ENCODE measurements at regions of chr20 and their contacts with region 1.

Region 1: DNA sequence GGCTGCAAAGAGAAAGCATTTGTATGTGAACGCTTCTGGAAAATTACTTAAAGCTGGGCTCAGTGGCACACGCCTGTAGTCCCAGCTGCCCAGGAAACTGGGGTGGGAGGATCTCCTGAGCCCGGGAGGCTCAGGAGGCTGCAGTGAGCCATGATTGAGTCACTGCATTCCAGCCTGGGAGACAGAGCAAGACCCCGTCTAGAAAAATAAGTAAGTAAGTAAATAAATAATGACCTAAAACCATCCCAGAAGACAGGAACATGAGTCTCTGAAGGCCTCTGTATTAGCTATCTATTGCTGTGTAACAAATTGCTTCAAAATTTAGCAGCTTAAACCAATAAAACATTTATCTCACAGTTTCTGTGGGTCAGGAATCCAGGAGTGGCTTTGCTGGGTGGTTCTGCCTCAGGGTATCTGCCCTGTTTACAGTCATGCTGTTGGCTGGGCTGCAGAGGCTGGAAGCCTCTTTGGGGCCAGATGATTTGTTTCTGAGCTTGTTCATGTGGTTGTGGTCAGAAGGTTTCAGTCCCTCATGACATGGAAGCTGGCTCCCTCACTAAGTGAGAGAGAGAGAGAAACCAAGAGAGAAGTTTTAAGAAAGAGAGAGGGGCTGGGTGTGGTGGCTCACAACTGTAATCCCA is 48.4 kb upstream of the NCOA3 start:
- DNase-seq: peak; percentile 75
- ATAC-seq: peak; percentile 82
- H3K4me3 Mint-ChIP-seq: peak overlapping the region; percentile 34
- H3K27ac Mint-ChIP-seq: peak overlapping the region; percentile 70
- H3K4me1 Mint-ChIP-seq: peaks cover 51% of the 10 kb centered on the region
- H3K27me3 Mint-ChIP-seq: no peaks in the 10 kb centered on the region
- CTCF ChIP-seq: no peak

Region 2: GRCh38 chr20:47464380-47465101 is 11.3 kb after region 1 on chr20:
- CTCF ChIA-PET with region 1: no interaction called
- POLR2A ChIA-PET with region 1: no interaction called
- intact Hi-C with region 1: no loop called
- DNase-seq: no peak
- ATAC-seq: no peak
- H3K4me3 Mint-ChIP-seq: no peak overlapping the region
- H3K27ac Mint-ChIP-seq: no peak overlapping the region
- H3K4me1 Mint-ChIP-seq: no peaks in the 10 kb centered on the region
- H3K27me3 Mint-ChIP-seq: no peaks in the 10 kb centered on the region
- CTCF ChIP-seq: no peak

Region 3: DNA sequence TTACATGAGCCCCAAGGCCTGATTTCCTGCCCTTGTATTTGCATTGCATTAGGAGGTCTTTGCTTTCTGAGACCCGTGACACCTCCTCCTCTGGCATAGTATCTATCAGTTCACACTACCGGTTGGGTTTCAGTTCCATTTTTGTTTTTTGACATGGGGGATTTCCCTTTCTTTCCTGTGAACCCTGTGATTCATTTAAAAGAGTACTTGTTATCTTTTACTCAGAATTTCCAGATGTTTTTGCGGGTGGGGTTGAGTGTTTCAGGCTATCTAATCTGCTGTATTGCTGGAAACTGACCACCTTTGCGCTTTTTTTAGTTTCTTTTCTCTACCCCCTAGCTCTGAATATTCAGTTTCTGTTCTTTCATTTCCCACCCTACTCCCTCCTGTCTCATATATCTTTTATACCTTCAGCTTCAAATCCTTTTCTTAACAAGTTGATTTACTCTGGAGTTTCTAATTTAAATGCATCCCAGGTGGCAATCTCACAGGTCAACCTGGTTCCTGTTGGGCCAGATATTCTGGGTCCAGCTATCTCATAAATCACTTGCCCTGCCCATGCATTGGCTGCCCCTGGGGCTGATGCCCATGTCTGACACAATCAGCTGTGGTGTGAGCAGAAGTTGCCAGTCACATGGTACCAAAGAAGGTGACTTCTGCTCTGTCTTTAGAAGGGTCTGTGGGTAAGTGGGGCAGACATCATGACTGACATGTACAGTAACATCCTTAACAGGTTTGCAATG is 34.1 kb after region 1 on chr20:
- CTCF ChIA-PET with region 1: interaction called, 5 read pairs
- POLR2A ChIA-PET with region 1: interaction called, 12 read pairs
- intact Hi-C with region 1: no loop called
- DNase-seq: peak; percentile 84
- ATAC-seq: peak; percentile 87
- H3K4me3 Mint-ChIP-seq: peak overlapping the region; percentile 54
- H3K27ac Mint-ChIP-seq: peak overlapping the region; percentile 100
- H3K4me1 Mint-ChIP-seq: peaks cover 61% of the 10 kb centered on the region
- H3K27me3 Mint-ChIP-seq: no peaks in the 10 kb centered on the region
- CTCF ChIP-seq: no peak

Region 4: GRCh38 chr20:47515843-47516242 is 62.6 kb after region 1 on chr20:
- CTCF ChIA-PET with region 1: no interaction called
- POLR2A ChIA-PET with region 1: no interaction called
- intact Hi-C with region 1: no loop called
- DNase-seq: no peak
- ATAC-seq: peak; percentile 88
- H3K4me3 Mint-ChIP-seq: no peak overlapping the region
- H3K27ac Mint-ChIP-seq: peak overlapping the region; percentile 75
- H3K4me1 Mint-ChIP-seq: peaks cover 50% of the 10 kb centered on the region
- H3K27me3 Mint-ChIP-seq: no peaks in the 10 kb centered on the region
- CTCF ChIP-seq: no peak

Measured in activated CD8-positive, alpha-beta T cell treated with anti-CD3 and anti-CD28 coated beads for 36 hours (primary cell).